GM12878 (cell line): ENCODE measurements at regions of chr12 and their contacts with region 1.

Region 1: GRCh38 chr12:49967042-49967776 is 5.5 kb downstream of the AQP5 start:
- DNase-seq: peak; percentile 15
- ATAC-seq: peak; percentile 94
- H3K4me3 ChIP-seq: no peak overlapping the region
- H3K27ac ChIP-seq: no peak overlapping the region
- H3K4me1 ChIP-seq: peaks cover 8% of the 10 kb centered on the region
- H3K27me3 ChIP-seq: peaks cover 5 to 6% of the 10 kb centered on the region in 2 experiments; a peak in 3 of 4 replicates
- CTCF ChIP-seq: peak; percentile 88 to 96 (median 95)
- EP300 ChIP-seq: no peak
- POLR2A ChIP-seq: no peak
- RAD21 ChIP-seq: peak; percentile 87

Region 2: DNA sequence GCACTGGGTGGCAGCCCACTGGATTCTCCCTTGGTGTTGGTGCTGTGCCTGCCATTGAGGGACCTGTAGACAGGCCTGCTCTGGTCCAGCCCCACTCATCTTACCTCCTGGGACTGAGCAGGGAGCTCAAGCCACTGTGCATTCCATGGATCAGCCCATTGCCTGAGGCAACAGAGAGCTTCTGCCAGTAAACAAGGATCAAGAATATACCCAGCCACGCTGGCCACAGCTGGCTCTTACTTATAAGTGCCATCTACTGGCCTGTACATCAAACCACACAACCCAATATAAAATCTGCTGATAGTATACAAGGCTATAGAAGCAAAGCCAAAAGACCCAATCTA is 357.5 kb before region 1 on chr12:
- CTCF ChIA-PET with region 1: no interaction called
- POLR2A ChIA-PET with region 1: no interaction called
- RAD21 ChIA-PET with region 1: no interaction called
- SMC1A ChIA-PET with region 1: no interaction called
- in situ Hi-C with region 1: no loop called
- intact Hi-C with region 1: no loop called
- DNase-seq: no peak
- ATAC-seq: peak; percentile 29; the same call in 1 of the 3 replicates
- H3K4me3 ChIP-seq: no peak overlapping the region
- H3K27ac ChIP-seq: no peak overlapping the region
- H3K4me1 ChIP-seq: no peaks in the 10 kb centered on the region
- H3K27me3 ChIP-seq: no peaks in the 10 kb centered on the region
- CTCF ChIP-seq: no peak
- EP300 ChIP-seq: no peak
- POLR2A ChIP-seq: no peak
- RAD21 ChIP-seq: no peak

Region 3: DNA sequence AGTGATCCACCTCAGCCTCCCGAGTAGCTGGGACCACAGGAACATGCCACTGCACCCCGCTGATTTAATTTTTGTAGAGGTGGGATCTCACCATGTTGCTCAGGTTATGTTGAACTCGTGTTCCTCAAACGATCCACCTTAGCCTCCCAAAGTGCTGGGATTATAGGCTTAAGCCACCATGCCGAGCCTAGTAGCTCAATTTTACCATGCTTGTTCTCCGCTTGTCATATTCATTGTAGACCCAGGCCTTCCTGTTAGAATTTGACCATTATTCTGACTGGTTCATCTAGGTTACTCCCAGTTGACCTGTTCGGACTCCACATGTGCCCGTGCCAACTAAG is 201.1 kb before region 1 on chr12:
- CTCF ChIA-PET with region 1: no interaction called
- POLR2A ChIA-PET with region 1: no interaction called
- RAD21 ChIA-PET with region 1: no interaction called
- SMC1A ChIA-PET with region 1: no interaction called
- in situ Hi-C with region 1: no loop called
- intact Hi-C with region 1: no loop called
- DNase-seq: no peak
- ATAC-seq: no peak
- H3K4me3 ChIP-seq: no peak overlapping the region
- H3K27ac ChIP-seq: no peak overlapping the region
- H3K4me1 ChIP-seq: peaks cover 26% of the 10 kb centered on the region
- H3K27me3 ChIP-seq: no peaks in the 10 kb centered on the region
- CTCF ChIP-seq: no peak
- EP300 ChIP-seq: no peak
- POLR2A ChIP-seq: no peak
- RAD21 ChIP-seq: no peak

Region 4: DNA sequence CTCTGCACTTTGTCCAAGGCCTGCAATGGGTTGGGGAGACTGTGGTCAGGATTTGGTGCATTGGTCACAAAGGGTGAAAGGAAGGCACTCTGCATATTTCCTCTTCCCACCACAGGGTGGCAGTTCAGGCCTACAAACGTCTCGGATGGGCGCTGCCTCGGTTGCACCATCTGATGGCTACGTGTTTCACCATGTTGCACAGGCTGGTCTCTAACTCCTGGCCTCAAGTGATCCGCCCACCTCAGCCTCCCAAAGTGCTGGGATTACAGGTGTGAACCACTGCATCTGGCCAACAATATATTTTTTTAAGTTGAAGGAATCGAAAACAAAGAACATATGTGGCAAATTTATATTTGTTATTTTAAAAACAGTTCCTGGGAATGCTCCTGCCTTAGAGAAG is 190.8 kb before region 1 on chr12:
- CTCF ChIA-PET with region 1: interaction called, 4 read pairs
- POLR2A ChIA-PET with region 1: no interaction called
- RAD21 ChIA-PET with region 1: interaction called, 3 read pairs
- SMC1A ChIA-PET with region 1: interaction called, 6 read pairs
- in situ Hi-C with region 1: no loop called
- intact Hi-C with region 1: loop called (anchors 1 kb)
- DNase-seq: no peak
- ATAC-seq: peak; percentile 95
- H3K4me3 ChIP-seq: no peak overlapping the region
- H3K27ac ChIP-seq: no peak overlapping the region
- H3K4me1 ChIP-seq: peaks cover 6% of the 10 kb centered on the region
- H3K27me3 ChIP-seq: no peaks in the 10 kb centered on the region
- CTCF ChIP-seq: peak; percentile 79 to 80 (median 79)
- EP300 ChIP-seq: no peak
- POLR2A ChIP-seq: no peak
- RAD21 ChIP-seq: peak; percentile 90

Region 5: GRCh38 chr12:49956663-49957569 is 10.3 kb before region 1 on chr12:
- CTCF ChIA-PET with region 1: interaction called, 12 read pairs
- POLR2A ChIA-PET with region 1: no interaction called
- RAD21 ChIA-PET with region 1: no interaction called
- SMC1A ChIA-PET with region 1: no interaction called
- in situ Hi-C with region 1: no loop called
- intact Hi-C with region 1: no loop called
- DNase-seq: no peak
- ATAC-seq: no peak
- H3K4me3 ChIP-seq: no peak overlapping the region
- H3K27ac ChIP-seq: no peak overlapping the region
- H3K4me1 ChIP-seq: no peaks in the 10 kb centered on the region
- H3K27me3 ChIP-seq: peaks cover 10 to 40% of the 10 kb centered on the region in 2 experiments
- CTCF ChIP-seq: no peak
- EP300 ChIP-seq: no peak
- POLR2A ChIP-seq: no peak
- RAD21 ChIP-seq: no peak

Region 6: GRCh38 chr12:50016501-50017475 is 49.6 kb after region 1 on chr12:
- CTCF ChIA-PET with region 1: interaction called, 10 read pairs
- POLR2A ChIA-PET with region 1: no interaction called
- RAD21 ChIA-PET with region 1: no interaction called
- SMC1A ChIA-PET with region 1: interaction called, 3 read pairs
- in situ Hi-C with region 1: no loop called
- intact Hi-C with region 1: no loop called
- DNase-seq: no peak
- ATAC-seq: no peak
- H3K4me3 ChIP-seq: no peak overlapping the region
- H3K27ac ChIP-seq: no peak overlapping the region
- H3K4me1 ChIP-seq: no peaks in the 10 kb centered on the region
- H3K27me3 ChIP-seq: no peaks in the 10 kb centered on the region
- CTCF ChIP-seq: no peak
- EP300 ChIP-seq: no peak
- POLR2A ChIP-seq: no peak
- RAD21 ChIP-seq: no peak

Region 7: DNA sequence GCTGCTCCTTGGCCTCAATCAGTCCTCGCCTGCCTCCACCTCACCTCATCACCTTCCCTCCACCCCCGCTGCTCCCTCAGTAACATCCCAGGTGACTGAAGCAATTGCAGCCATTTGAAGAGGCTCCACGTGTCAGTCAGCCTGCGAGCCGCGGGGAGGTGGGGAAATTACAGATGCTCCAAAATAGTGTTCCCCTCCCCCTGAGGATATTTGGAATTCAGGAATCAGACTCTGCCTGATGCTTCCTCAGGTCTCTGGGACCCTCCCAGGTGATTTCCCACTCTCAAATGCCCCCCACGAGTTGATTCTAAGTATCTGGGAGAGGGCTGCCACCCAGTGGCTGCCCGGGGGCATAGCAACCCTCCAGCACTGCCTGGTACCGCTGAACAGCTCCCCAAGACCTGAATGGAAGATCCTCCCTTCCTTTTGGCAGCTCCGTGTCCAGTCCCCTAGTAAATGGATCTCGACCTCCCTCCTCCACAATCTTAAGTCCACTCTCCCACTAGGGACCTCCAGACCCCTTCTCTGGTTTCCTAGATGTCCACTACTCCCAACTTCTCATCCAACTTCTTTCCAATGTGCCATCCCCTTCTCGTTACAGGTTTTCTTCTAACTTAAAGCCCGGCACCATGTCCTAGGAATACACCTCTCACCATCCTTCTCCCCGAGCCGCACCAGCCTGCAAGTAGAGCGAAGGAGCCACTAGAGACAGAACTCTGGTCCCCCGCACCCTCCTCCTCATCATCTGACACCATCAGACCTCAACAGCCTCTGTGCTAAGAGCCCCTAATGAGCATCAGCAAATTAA is 88.8 kb after region 1 on chr12:
- CTCF ChIA-PET with region 1: interaction called, 73 read pairs
- POLR2A ChIA-PET with region 1: no interaction called
- RAD21 ChIA-PET with region 1: interaction called, 31 read pairs
- SMC1A ChIA-PET with region 1: interaction called, 25 read pairs
- in situ Hi-C with region 1: no loop called
- intact Hi-C with region 1: loop called (anchors 1 kb)
- DNase-seq: no peak
- ATAC-seq: peak; percentile 84
- H3K4me3 ChIP-seq: no peak overlapping the region
- H3K27ac ChIP-seq: no peak overlapping the region
- H3K4me1 ChIP-seq: 0 out of 2 replicates have a peak, but pooled peaks cover 4% of the 10 kb centered on the region
- H3K27me3 ChIP-seq: peaks cover 12 to 21% of the 10 kb centered on the region in 2 experiments; a peak in 3 of 4 replicates
- CTCF ChIP-seq: peak; percentile 81 to 98 (median 96)
- EP300 ChIP-seq: no peak
- POLR2A ChIP-seq: no peak
- RAD21 ChIP-seq: peak; percentile 79

Region 8: DNA sequence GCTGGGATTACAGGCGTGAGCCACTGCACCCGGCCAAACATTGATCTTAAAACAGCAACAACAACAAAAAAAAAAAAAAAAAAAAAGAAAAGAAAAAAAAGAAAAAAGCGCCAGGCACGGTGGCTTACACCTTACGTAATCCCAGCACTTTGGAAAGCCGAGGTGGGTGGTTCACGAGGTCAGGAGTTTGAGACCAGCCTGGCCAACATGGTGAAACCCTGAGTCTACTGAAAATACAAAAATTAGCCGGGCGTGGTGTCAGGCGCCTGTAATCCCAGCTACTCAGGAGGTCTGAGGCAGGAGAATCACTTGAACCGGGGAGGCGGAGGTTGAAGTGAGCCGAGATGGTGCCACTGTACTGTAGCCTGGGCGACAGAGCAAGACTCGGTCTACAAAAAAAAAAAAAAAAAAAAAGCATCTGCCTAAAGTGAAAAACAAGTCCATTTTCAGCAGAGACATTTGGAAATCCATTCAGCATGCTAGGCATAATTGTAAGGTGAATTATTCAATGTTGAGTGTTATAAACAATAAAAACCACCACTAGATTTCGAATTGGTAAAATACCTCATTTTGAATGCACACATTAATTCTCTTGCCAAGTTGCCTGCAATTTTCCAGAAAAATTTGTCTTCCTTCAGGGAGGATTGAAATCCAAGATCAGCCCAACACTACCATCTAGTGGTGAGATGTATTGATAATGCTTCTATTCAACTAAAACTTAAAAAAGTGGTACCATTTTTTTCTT is 207.9 kb after region 1 on chr12:
- CTCF ChIA-PET with region 1: interaction called, 12 read pairs
- POLR2A ChIA-PET with region 1: interaction called, 3 read pairs
- RAD21 ChIA-PET with region 1: no interaction called
- SMC1A ChIA-PET with region 1: interaction called, 3 read pairs
- in situ Hi-C with region 1: no loop called
- intact Hi-C with region 1: loop called (anchors 5 kb)
- DNase-seq: no peak
- ATAC-seq: peak; percentile 34; the same call in 1 of the 3 replicates
- H3K4me3 ChIP-seq: no peak overlapping the region
- H3K27ac ChIP-seq: no peak overlapping the region
- H3K4me1 ChIP-seq: no peaks in the 10 kb centered on the region
- H3K27me3 ChIP-seq: no peaks in the 10 kb centered on the region
- CTCF ChIP-seq: peak; percentile 47 to 64 (median 53); a peak in 5 of 6 replicates
- EP300 ChIP-seq: no peak
- POLR2A ChIP-seq: no peak
- RAD21 ChIP-seq: peak; percentile 73